ENCODE measurements at regions of chr7 and their contacts with region 1.

Region 1: GRCh38 chr7:41705109-41705901 is 2.4 kb upstream of the INHBA start:
- DNase-seq: peak; percentile 88

Region 2: GRCh38 chr7:41003031-41003925 is 702.0 kb before region 1 on chr7:
- in situ Hi-C with region 1: loop called (anchors 25 kb)
- DNase-seq: peak; percentile 79